PC-9 (cell line): ENCODE measurements at regions of chr1 and their contacts with region 1.

Region 1: DNA sequence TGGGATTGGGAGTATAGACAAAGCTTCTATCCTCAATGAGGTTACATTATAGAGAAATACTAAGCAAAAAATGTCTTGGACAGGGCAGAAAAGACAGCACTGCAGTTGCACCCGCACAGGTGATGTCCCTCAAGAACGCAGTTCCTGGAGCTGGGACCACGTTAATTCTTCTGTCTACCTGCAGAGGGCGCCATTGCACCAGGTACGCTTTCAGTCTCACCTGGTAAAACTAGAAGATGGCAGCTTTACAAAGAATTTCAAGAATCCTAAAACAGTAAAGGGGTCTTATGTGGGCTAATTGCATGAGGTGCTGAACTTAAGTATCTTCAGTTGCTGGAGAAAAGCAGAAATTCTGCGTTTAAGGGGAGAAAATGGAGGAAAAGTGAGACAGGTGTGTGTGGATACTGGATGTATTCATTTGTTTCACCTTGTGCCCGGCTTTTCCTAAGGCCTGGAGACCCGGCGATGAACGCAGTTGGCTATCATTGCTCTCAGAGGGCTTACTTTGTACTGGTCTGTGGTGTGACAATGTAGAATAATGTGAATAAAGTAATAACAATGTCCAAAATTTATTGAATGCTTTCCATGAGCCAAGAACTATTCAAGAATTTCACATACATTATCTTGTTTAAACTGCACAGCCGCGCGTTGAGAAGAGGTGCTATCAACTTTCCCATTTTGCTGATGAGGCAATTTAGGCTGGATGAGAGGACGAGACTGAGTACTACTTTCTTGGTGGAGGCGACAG is 276.3 kb upstream of the GREM2 start:
- DNase-seq: peak in 1 of 2 experiments; percentile 47
- H3K4me3 ChIP-seq: no peak overlapping the region
- H3K27ac ChIP-seq: no peak overlapping the region
- H3K4me1 ChIP-seq: no peaks in the 10 kb centered on the region
- H3K27me3 ChIP-seq: no peaks in the 10 kb centered on the region
- CTCF ChIP-seq: peak; percentile 92

Region 2: GRCh38 chr1:240946926-240947325 is 58.7 kb after region 1 on chr1:
- CTCF ChIA-PET with region 1: no interaction called
- POLR2A ChIA-PET with region 1: no interaction called
- intact Hi-C with region 1: loop called (anchors 2 kb)
- DNase-seq: peak in 1 of 2 experiments; percentile 24
- H3K4me3 ChIP-seq: no peak overlapping the region
- H3K27ac ChIP-seq: no peak overlapping the region
- H3K4me1 ChIP-seq: no peaks in the 10 kb centered on the region
- H3K27me3 ChIP-seq: peaks cover 18% of the 10 kb centered on the region; the same call in 1 of the 2 replicates
- CTCF ChIP-seq: peak; percentile 71